SK-N-SH (cell line): ENCODE measurements at regions of chr15 and their contacts with region 1.

Region 1: GRCh38 chr15:41904541-41905005 is 10.7 kb upstream of the SPTBN5 start:
- DNase-seq: peak; percentile 89
- H3K4me3 ChIP-seq: no peak overlapping the region
- H3K27ac ChIP-seq: peak overlapping the region in 1 of 2 experiments; percentile 44; a peak in 1 of 4 replicates
- H3K4me1 ChIP-seq: peaks cover 0 to 19% of the 10 kb centered on the region in 2 experiments; a peak in 1 of 4 replicates
- H3K27me3 ChIP-seq: no peaks in the 10 kb centered on the region
- CTCF ChIP-seq: peak; percentile 88
- EP300 ChIP-seq: no peak
- RAD21 ChIP-seq: peak; percentile 96

Region 2: DNA sequence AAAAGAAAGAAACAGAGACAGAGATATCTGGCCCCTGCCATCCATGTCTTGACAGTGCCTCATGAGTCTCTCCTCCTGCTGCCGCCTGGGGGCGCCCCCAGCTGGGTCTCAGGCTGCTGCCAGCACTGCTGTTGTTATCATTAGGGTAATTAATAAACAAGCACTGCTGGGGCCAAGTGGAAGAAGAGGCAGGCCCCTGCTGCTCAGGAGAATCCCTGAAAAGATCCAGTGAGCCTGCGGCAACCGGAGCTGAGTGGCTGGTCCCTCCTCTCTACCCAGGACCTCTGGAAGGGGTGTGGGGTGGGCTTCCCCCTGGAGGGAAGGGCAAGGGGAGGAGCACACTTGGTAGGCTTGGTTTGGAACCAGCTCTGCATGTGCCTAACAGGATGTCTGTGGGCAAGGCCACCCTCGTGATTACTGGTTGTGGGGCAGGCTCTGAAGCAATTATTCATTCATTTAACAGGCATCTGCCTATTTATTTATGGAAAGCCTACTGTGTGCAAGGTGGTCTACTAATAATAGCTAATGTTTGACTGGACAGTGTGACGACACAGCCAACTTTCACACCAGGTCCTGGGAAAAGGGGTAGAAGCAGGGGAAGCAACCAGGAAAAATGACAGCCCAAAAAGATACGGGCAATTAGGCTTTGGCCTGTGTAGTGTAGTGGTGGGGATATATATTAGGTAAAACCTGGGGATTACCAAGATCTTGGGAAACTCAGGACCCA is 346.7 kb before region 1 on chr15:
- CTCF ChIA-PET with region 1: interaction called, 12 read pairs
- POLR2A ChIA-PET with region 1: no interaction called
- DNase-seq: peak; percentile 89
- H3K4me3 ChIP-seq: peak overlapping the region; percentile 58 to 60
- H3K27ac ChIP-seq: peak overlapping the region; percentile 30 to 45
- H3K4me1 ChIP-seq: peaks cover 4 to 21% of the 10 kb centered on the region in 2 experiments; a peak in 3 of 4 replicates
- H3K27me3 ChIP-seq: no peaks in the 10 kb centered on the region
- CTCF ChIP-seq: peak; percentile 99
- EP300 ChIP-seq: 0 out of 4 replicates have a peak, but pooled peaks of 1 of the 2 experiments have one; percentile 17
- RAD21 ChIP-seq: peak; percentile 84

Region 3: DNA sequence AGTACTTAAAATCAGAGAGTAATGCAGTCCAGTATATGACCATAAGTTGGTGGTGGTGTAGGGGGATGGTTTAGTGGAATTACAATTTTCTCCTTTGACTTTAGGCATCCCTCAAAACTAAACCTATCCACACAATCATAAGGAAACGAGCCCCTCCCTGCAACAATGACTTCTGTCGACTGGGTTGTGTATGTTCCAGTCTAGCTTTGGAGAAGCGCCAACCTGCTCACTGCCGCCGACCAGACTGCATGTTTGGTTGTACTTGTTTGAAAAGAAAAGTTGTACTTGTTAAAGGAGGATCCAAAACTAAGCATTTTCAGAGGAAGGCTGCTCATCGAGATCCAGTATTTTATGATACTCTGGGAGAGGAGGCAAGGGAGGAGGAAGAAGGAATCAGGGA is 191.5 kb before region 1 on chr15:
- CTCF ChIA-PET with region 1: no interaction called
- POLR2A ChIA-PET with region 1: no interaction called
- DNase-seq: no peak
- H3K4me3 ChIP-seq: no peak overlapping the region
- H3K27ac ChIP-seq: no peak overlapping the region
- H3K4me1 ChIP-seq: no peaks in the 10 kb centered on the region
- H3K27me3 ChIP-seq: no peaks in the 10 kb centered on the region
- CTCF ChIP-seq: no peak
- EP300 ChIP-seq: no peak
- RAD21 ChIP-seq: no peak

Region 4: DNA sequence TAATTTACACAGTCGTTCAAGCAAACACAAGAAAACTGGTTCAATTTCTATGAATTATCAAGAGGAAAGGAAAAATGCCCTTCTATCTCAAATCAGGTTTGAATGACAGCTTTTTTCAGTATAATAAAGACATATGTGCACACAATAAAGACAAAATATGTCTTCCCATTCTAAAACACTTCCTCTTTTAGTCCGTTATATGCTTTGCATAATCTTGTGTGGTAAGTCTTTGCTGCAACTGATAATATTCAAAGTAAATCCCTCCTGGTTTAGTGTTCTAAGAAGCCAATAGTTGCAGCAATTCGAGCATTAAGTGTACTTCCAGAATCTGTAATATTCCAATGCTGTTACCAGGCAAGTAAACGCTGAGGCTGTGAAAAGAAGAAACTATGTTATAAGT is 174.0 kb before region 1 on chr15:
- CTCF ChIA-PET with region 1: no interaction called
- POLR2A ChIA-PET with region 1: no interaction called
- DNase-seq: no peak
- H3K4me3 ChIP-seq: no peak overlapping the region
- H3K27ac ChIP-seq: no peak overlapping the region
- H3K4me1 ChIP-seq: no peaks in the 10 kb centered on the region
- H3K27me3 ChIP-seq: no peaks in the 10 kb centered on the region
- CTCF ChIP-seq: no peak
- EP300 ChIP-seq: no peak
- RAD21 ChIP-seq: no peak

Region 5: DNA sequence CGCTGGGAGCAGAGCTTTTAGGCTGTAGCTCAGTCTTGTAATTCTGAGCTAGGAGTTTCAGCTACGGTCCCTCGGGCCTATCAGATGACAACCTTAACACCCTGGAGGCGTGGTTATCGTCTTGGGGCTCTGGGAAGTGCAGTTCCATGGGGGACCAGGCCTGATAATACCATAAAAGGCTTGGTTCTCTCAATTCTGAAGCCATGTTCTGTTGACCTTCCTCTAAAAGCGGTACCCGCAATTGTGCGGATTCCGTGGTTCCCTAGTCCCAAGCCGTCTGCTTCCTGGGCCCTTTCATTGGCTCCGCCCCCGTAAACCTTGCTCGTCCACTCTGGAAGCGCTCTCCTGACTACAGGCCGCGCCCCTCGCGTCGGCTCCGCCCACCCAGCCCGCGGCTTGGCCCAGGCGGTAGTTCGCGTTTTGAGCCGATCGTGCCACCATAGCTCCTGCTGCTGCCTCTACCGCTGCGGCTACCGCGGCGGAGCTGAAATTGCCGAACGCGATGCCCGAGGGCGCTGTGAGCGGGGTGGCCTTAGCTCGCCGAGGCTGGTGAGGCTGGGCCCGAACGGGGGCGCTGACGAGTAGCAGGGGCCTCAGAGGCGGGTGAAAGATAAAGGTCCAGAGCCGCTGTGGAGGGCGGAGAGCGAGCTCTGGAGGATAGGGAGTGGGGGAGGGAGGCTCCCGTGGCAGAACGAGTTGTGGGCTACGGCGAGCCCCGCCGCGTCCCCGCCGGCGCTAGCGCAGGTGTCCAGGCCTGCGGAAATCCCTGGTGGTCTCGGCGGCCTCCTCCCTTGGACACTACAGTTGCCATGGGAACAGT is 130.3 kb before region 1 on chr15 and contains the start of gene MAPKBP1:
- CTCF ChIA-PET with region 1: interaction called, 77 read pairs
- POLR2A ChIA-PET with region 1: interaction called, 7 read pairs
- DNase-seq: peak; percentile 94
- H3K4me3 ChIP-seq: peak within 1 kb of the TSS; percentile 76 to 88
- H3K27ac ChIP-seq: peak within 1 kb of the TSS; percentile 87 to 89
- H3K4me1 ChIP-seq: peaks cover 23 to 29% of the 10 kb centered on the region in 2 experiments
- H3K27me3 ChIP-seq: no peaks in the 10 kb centered on the region
- CTCF ChIP-seq: peak; percentile 75
- EP300 ChIP-seq: peak; percentile 15 to 48; a peak in 2 of 4 replicates
- RAD21 ChIP-seq: peak; percentile 56
- polyA plus RNA-seq, gene MAPKBP1: 5.2 and 6.7 TPM in 2 replicates

Region 6: GRCh38 chr15:41820791-41821423 is 83.7 kb before region 1 on chr15:
- CTCF ChIA-PET with region 1: interaction called, 17 read pairs
- POLR2A ChIA-PET with region 1: no interaction called
- DNase-seq: no peak
- H3K4me3 ChIP-seq: no peak overlapping the region
- H3K27ac ChIP-seq: no peak overlapping the region
- H3K4me1 ChIP-seq: no peaks in the 10 kb centered on the region
- H3K27me3 ChIP-seq: no peaks in the 10 kb centered on the region
- CTCF ChIP-seq: no peak
- EP300 ChIP-seq: no peak
- RAD21 ChIP-seq: no peak

Region 7: GRCh38 chr15:41849861-41850260 is 54.7 kb before region 1 on chr15:
- CTCF ChIA-PET with region 1: interaction called, 12 read pairs
- POLR2A ChIA-PET with region 1: no interaction called
- DNase-seq: no peak
- H3K4me3 ChIP-seq: no peak overlapping the region
- H3K27ac ChIP-seq: no peak overlapping the region
- H3K4me1 ChIP-seq: peaks cover 0 to 19% of the 10 kb centered on the region in 2 experiments; a peak in 1 of 4 replicates
- H3K27me3 ChIP-seq: no peaks in the 10 kb centered on the region
- CTCF ChIP-seq: no peak
- EP300 ChIP-seq: no peak
- RAD21 ChIP-seq: no peak

Region 8: DNA sequence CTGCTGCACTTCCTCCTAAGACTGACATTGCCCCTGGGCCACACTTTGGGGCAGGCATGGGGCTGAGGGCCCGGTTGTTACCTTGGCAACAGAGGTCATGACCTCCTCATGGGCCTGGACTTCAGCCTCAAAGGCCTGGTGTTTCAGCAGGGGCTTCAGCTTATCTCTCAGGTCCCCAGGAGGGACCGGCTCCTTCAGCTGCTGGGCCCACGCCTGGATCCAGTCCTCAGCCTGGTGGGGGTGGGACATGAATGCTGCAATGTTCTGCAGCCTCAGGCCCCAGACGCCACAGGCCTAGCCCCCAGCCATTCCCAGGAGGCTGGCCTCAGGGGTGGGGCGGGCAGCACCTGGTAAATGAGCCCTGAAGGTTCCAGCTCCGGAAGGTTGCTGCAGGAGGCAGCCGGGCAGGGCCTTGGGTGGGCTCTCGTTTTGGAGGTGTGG is 38.3 kb before region 1 on chr15:
- CTCF ChIA-PET with region 1: interaction called, 18 read pairs
- POLR2A ChIA-PET with region 1: no interaction called
- DNase-seq: peak; percentile 69
- H3K4me3 ChIP-seq: no peak overlapping the region
- H3K27ac ChIP-seq: no peak overlapping the region; a peak in 1 of 4 replicates
- H3K4me1 ChIP-seq: peaks cover 0 to 30% of the 10 kb centered on the region in 2 experiments; a peak in 1 of 4 replicates
- H3K27me3 ChIP-seq: no peaks in the 10 kb centered on the region
- CTCF ChIP-seq: no peak
- EP300 ChIP-seq: no peak
- RAD21 ChIP-seq: no peak

Region 9: GRCh38 chr15:41996391-41996790 is 91.8 kb after region 1 on chr15:
- CTCF ChIA-PET with region 1: no interaction called
- POLR2A ChIA-PET with region 1: no interaction called
- DNase-seq: no peak
- H3K4me3 ChIP-seq: no peak overlapping the region
- H3K27ac ChIP-seq: no peak overlapping the region
- H3K4me1 ChIP-seq: no peaks in the 10 kb centered on the region; a peak in 1 of 4 replicates
- H3K27me3 ChIP-seq: peaks cover 3% of the 10 kb centered on the region
- CTCF ChIP-seq: no peak
- EP300 ChIP-seq: no peak
- RAD21 ChIP-seq: no peak